CD14-positive monocyte (primary cell): ENCODE measurements at regions of chr17 and their contacts with region 1.

Region 1: DNA sequence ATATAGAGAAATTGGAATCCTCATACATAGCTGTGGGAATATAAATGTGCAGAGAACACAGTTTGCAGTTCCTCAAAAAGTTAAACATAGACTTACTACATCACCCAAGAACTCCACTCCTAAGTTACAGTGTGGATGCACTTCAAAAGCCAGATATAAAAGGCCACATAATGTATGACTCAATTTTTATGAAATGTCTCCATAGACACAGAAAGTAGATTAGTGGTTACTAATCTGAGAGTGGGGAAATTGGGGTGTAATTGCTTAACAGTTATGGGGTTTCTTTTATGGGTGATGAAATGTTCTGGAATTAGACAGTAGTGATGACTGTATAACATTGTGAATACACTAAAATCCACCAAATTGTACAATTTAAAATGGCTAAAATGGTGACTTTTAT is 60.9 kb downstream of the CACNG1 start:
- DNase-seq: peak; percentile 84 to 94 (median 92)
- H3K4me3 ChIP-seq: no peak overlapping the region
- H3K4me3 Mint-ChIP-seq: no peak overlapping the region
- H3K27ac ChIP-seq: peak overlapping the region; percentile 82 to 91
- H3K27ac Mint-ChIP-seq: peak overlapping the region; percentile 93 to 99 (median 97)
- H3K4me1 ChIP-seq: peaks cover 15 to 23% of the 10 kb centered on the region in 2 donors
- H3K4me1 Mint-ChIP-seq: peaks cover 26% of the 10 kb centered on the region
- H3K27me3 ChIP-seq: no peaks in the 10 kb centered on the region
- H3K27me3 Mint-ChIP-seq: peaks cover 0 to 5% (median 3%) of the 10 kb centered on the region in 3 donors
- CTCF ChIP-seq: no peak

Region 2: DNA sequence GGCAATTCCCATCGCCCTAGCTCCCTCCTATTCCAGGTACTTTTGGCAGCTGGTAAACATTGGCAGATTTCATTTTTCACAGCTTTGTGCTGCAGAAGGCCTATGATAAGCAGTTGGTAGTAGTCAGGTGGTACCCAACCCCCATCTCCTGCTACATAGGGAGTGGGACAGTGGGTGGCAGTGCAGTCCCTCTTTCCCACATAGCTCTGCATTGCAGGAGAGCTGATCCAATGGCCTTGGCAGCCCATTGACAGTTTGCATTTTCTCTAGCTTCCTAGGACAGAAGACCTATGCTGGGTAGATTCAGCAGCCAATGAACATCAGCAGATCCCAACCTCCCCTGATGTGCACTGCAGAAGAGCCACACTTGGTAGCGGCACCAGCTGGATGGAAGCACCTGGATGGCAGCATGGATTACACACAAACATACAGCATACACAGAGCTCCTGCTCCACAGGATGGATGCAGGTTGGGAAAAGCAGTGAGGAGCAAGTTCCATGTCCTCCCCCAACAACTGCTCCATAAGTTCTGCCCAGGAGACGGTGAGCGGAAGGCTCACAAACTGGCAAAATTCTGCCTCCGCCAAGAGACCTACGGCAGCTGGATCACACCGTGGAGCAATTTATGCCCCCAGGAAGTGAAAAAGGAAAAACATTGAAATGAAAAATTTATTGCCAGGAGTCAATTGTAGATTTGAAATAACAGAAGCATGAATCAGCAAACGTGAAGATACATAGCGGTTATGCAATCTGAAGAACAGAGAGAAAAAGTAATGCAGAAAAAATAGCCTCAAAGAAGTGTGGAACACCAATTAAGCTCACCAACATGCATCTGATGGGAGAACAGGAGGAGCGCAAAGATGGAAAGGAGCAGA is 34.8 kb after region 1 on chr17:
- intact Hi-C with region 1: loop called in 1 of 2 experiments (anchors 2 kb)
- DNase-seq: no peak
- H3K4me3 ChIP-seq: no peak overlapping the region
- H3K4me3 Mint-ChIP-seq: peak overlapping the region in 1 of 2 donors; percentile 44
- H3K27ac ChIP-seq: peak overlapping the region; percentile 41 to 66
- H3K27ac Mint-ChIP-seq: peak overlapping the region; percentile 1 to 89 (median 70)
- H3K4me1 ChIP-seq: peaks cover 10 to 13% of the 10 kb centered on the region in 2 donors
- H3K4me1 Mint-ChIP-seq: peaks cover 24% of the 10 kb centered on the region
- H3K27me3 ChIP-seq: no peaks in the 10 kb centered on the region
- H3K27me3 Mint-ChIP-seq: no peaks in the 10 kb centered on the region
- CTCF ChIP-seq: no peak

Region 3: GRCh38 chr17:67452681-67453554 is 347.7 kb after region 1 on chr17:
- intact Hi-C with region 1: no loop called
- DNase-seq: no peak
- H3K4me3 ChIP-seq: no peak overlapping the region
- H3K4me3 Mint-ChIP-seq: no peak overlapping the region
- H3K27ac ChIP-seq: no peak overlapping the region
- H3K27ac Mint-ChIP-seq: no peak overlapping the region
- H3K4me1 ChIP-seq: no peaks in the 10 kb centered on the region
- H3K4me1 Mint-ChIP-seq: peaks cover 7% of the 10 kb centered on the region
- H3K27me3 ChIP-seq: no peaks in the 10 kb centered on the region
- H3K27me3 Mint-ChIP-seq: no peaks in the 10 kb centered on the region
- CTCF ChIP-seq: no peak